CD4-positive, alpha-beta memory T cell (primary cell): ENCODE measurements at regions of chr14 and their contacts with region 1.

Region 1: GRCh38 chr14:35808076-35808652 is 931 bp downstream of the RALGAPA1 start:
- DNase-seq: peak in 3 of 5 donors; percentile 4 to 57 (median 11)
- H3K4me3 ChIP-seq: peak overlapping the region; percentile 45 to 81
- H3K4me3 Mint-ChIP-seq: peak overlapping the region; percentile 94 to 99 (median 98)
- H3K27ac ChIP-seq: peak overlapping the region; percentile 84
- H3K27ac Mint-ChIP-seq: peak overlapping the region; percentile 89 to 99 (median 98)
- H3K4me1 ChIP-seq: peaks cover 23% of the 10 kb centered on the region
- H3K4me1 Mint-ChIP-seq: peaks cover 19 to 47% (median 34%) of the 10 kb centered on the region in 4 donors
- H3K27me3 ChIP-seq: no peaks in the 10 kb centered on the region
- H3K27me3 Mint-ChIP-seq: no peaks in the 10 kb centered on the region

Region 2: DNA sequence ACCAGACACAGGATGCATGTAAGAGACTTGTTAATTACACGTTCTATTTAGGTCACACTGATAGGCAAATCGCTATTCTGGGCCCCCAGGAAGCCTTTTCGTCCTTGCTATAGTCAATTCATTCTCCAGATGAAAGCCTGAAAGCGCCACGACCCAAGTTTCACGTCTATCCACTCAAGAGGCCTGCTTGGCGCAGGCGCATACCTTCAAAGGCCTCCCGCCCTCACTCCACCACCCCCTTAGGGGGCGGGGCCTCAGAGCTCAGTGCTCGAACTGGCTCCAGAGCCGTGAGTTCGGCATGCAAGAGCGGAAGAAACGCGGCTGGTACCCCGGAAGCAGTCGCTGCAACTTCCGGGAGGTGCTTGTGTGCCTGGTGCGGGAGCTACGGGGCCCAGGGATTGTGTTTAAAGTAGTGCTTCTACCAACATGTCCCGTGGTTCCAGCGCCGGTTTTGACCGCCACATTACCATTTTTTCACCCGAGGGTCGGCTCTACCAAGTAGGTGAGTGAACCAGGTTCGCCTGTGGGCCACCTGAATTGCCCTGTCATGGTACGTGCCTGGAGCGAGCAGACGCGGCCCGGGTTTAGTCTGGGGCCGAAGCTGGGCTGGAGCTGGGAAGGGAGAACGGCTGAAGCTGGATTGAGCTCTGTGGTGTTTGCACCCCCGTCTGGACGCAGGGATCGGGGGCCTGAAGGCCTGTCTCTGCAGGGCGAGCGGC is 516.0 kb before region 1 on chr14 and contains the start of gene PSMA6:
- CTCF ChIA-PET with region 1: no interaction called
- POLR2A ChIA-PET with region 1: no interaction called
- intact Hi-C with region 1: loop called (anchors 5 kb)
- DNase-seq: peak; percentile 98 to 100 (median 99)
- H3K4me3 ChIP-seq: peak within 1 kb of the TSS; percentile 77 to 91
- H3K4me3 Mint-ChIP-seq: peak within 1 kb of the TSS; percentile 93 to 99 (median 98)
- H3K27ac ChIP-seq: peak within 1 kb of the TSS; percentile 97
- H3K27ac Mint-ChIP-seq: peak within 1 kb of the TSS; percentile 96 to 99 (median 98)
- H3K4me1 ChIP-seq: peaks cover 48% of the 10 kb centered on the region
- H3K4me1 Mint-ChIP-seq: peaks cover 30 to 65% (median 43%) of the 10 kb centered on the region in 4 donors
- H3K27me3 ChIP-seq: no peaks in the 10 kb centered on the region
- H3K27me3 Mint-ChIP-seq: no peaks in the 10 kb centered on the region
- total RNA-seq, gene PSMA6: 84.6 to 86.2 TPM

Region 3: DNA sequence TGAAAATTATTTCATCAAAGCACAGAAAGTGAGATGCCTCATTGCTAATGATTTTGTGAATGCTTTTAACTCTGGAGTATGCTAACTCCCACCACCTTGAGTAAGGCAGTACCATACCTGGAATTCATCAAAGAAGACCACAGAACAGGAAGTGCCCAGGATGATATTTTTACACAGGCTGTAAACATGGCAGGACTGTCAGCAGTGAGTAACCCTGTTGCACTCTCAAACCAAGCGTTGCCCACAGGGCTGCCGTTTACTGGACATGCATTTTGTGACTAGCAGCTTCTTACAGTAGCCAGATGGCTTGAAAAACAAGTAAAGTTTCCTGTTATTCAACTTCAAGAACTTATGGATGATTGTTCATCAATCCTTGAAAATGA is 41.5 kb before region 1 on chr14:
- CTCF ChIA-PET with region 1: no interaction called
- POLR2A ChIA-PET with region 1: no interaction called
- intact Hi-C with region 1: loop called (anchors 5 kb)
- DNase-seq: no peak
- H3K4me3 ChIP-seq: no peak overlapping the region
- H3K4me3 Mint-ChIP-seq: peak overlapping the region in 3 of 8 donors; percentile 4 to 44 (median 36)
- H3K27ac ChIP-seq: no peak overlapping the region
- H3K27ac Mint-ChIP-seq: peak overlapping the region in 4 of 7 donors; percentile 29 to 53 (median 39)
- H3K4me1 ChIP-seq: peaks cover 19% of the 10 kb centered on the region
- H3K4me1 Mint-ChIP-seq: peaks cover 8 to 21% (median 15%) of the 10 kb centered on the region in 4 donors
- H3K27me3 ChIP-seq: no peaks in the 10 kb centered on the region
- H3K27me3 Mint-ChIP-seq: no peaks in the 10 kb centered on the region